Dendritic cell treated with granulocyte-macrophage colony-stimulating factor and Interleukin-4, amounts not matched to agents 40 ng/mL and 50 ng/mL, for 4 days (primary cell): ENCODE measurements at regions of chr6 and their contacts with region 1.

Region 1: DNA sequence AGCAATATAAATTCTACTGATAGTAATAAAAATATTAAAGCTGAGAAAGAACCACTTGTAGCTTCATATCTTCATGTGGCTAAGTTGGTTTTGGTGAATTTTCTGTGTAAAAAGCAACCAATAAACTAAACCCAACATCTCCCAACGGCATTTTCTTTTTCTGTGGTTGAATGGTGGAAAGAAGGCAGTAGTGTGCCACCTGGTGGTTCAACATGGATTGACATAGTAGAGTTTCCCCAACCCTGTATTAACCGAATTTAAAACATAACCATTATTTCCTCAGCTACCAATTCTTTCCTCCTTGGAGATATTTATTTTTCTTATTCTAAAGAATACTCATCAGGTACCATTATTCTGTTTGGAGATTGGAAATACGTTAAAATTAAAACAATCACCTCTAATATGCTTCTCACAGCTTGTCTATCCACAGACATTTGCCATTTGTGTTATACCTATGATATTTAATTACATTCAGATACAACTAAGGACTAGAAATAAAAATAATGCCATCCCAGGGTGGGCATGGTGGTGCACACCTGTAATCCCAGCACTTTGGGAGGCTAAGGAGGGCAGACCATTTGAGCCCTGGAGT is 117.1 kb upstream of the EEF1E1 start:
- H3K4me3 Mint-ChIP-seq: no peak overlapping the region
- H3K27ac Mint-ChIP-seq: no peak overlapping the region
- H3K4me1 Mint-ChIP-seq: no peaks in the 10 kb centered on the region
- H3K27me3 Mint-ChIP-seq: peaks cover 4% of the 10 kb centered on the region

Region 2: DNA sequence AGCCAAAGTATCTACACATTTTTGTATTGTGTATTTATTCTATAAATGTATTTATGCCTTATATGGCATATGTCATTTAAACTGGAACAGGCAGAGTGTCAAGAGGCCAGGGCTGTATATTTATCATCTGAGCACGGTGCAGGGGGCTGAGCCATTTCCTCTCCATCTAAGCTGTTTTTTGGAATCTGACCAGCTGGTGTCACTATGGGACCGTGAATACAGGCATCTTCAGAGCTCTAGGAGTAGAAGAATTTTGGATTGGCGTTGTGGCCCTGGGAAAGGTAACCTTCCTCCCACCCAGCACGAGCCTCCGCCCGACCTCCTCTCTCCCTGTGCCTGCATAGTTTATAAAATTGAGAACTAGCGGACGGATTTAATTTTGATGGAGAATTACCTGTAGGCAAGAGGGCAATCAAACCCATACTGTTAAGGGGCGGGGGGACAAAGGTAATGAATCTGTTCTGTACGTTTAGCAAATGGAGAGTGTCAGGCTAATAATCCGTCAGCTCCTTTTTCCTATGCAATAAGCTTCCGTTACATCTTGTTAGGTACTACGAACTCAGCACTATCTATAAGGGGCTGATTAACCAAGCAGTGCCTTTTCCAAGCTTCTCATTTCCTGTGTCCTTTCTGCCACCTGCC is 88.1 kb before region 1 on chr6:
- intact Hi-C with region 1: loop called (anchors 1 kb)
- H3K4me3 Mint-ChIP-seq: no peak overlapping the region
- H3K27ac Mint-ChIP-seq: no peak overlapping the region
- H3K4me1 Mint-ChIP-seq: peaks cover 16% of the 10 kb centered on the region
- H3K27me3 Mint-ChIP-seq: peaks cover 4% of the 10 kb centered on the region